ENCODE measurements at regions of chrX and their contacts with region 1.

Region 1: DNA sequence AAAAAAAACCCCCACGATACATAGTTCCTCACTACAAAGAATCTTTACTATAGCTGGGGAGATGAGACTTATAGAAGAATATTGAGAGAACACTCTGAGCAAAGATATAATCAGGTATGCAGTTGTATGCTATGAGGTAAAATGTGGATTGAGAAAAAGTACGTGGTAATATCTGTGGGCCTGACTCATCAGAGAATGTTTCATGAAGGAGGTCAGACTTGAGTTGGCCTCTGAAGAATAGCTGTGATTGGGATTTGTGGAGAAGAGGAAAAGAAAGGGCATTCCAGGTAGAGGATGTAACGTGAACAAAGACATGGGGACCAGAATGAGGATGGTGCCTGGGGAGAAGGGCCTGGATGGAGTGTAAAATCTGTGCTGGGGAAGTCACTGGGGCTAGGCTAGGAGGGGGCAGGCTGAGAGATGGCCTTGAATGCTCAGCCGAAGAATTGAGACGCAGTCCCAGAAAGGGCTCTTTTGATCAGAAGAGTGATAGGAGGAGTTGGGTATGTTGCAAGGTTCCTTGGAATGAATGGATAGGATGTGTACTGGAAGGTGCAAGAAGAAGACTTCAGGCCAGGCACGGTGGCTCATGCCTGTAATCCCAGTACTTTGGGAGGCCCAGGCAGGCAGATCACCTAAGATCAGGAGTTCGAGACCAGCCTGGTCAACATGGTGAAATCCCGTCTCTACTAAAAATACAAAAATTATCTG is 5.4 kb upstream of the NLGN3 start:
- DNase-seq: no peak
- H3K4me3 ChIP-seq: no peak overlapping the region
- H3K4me3 Mint-ChIP-seq: no peak overlapping the region
- H3K27ac Mint-ChIP-seq: no peak overlapping the region
- H3K4me1 ChIP-seq: no peaks in the 10 kb centered on the region
- H3K4me1 Mint-ChIP-seq: no peaks in the 10 kb centered on the region
- H3K27me3 ChIP-seq: no peaks in the 10 kb centered on the region
- H3K27me3 Mint-ChIP-seq: no peaks in the 10 kb centered on the region
- CTCF ChIP-seq: no peak

Region 2: DNA sequence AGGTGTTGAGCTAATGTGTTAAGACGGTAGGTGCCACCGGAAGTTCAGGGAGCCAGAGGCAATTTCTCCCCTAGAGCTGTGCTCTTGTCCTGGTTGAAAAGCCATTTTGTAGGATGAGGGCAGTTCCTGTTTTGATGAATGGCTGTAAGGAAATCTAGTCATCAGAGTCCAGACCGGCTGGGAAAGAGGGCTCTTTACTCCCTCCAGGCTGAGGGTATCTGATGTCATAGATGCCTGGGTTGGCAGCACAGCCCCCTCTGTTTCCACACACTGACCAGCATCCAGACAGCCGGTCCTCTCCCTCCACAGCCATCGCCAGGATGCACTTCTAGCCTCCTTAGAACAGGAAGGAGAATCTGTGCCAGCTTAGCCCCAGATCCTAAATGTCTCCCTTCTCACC is 12.7 kb after region 1 on chrX:
- CTCF ChIA-PET with region 1: no interaction called
- POLR2A ChIA-PET with region 1: no interaction called
- intact Hi-C with region 1: no loop called
- DNase-seq: no peak
- H3K4me3 ChIP-seq: no peak overlapping the region
- H3K4me3 Mint-ChIP-seq: no peak overlapping the region
- H3K27ac Mint-ChIP-seq: no peak overlapping the region
- H3K4me1 ChIP-seq: no peaks in the 10 kb centered on the region
- H3K4me1 Mint-ChIP-seq: peaks cover 6% of the 10 kb centered on the region
- H3K27me3 ChIP-seq: no peaks in the 10 kb centered on the region
- H3K27me3 Mint-ChIP-seq: no peaks in the 10 kb centered on the region
- CTCF ChIP-seq: no peak

Region 3: GRCh38 chrX:71432733-71433132 is 293.5 kb after region 1 on chrX:
- CTCF ChIA-PET with region 1: interaction called, 10 read pairs
- POLR2A ChIA-PET with region 1: no interaction called
- intact Hi-C with region 1: no loop called
- DNase-seq: no peak
- H3K4me3 ChIP-seq: no peak overlapping the region
- H3K4me3 Mint-ChIP-seq: no peak overlapping the region
- H3K27ac Mint-ChIP-seq: no peak overlapping the region
- H3K4me1 ChIP-seq: no peaks in the 10 kb centered on the region
- H3K4me1 Mint-ChIP-seq: no peaks in the 10 kb centered on the region
- H3K27me3 ChIP-seq: no peaks in the 10 kb centered on the region
- H3K27me3 Mint-ChIP-seq: no peaks in the 10 kb centered on the region
- CTCF ChIP-seq: no peak

Measured in Caco-2 (cell line).